H1 (cell line): ENCODE measurements at regions of chr17 and their contacts with region 1.

Region 1: GRCh38 chr17:39099663-39100286 is 51.7 kb downstream of the PLXDC1 start:
- DNase-seq: no peak
- H3K4me3 ChIP-seq: no peak overlapping the region
- H3K27ac ChIP-seq: no peak overlapping the region
- H3K4me1 ChIP-seq: peaks cover 0 to 3% (median 0%) of the 10 kb centered on the region in 4 experiments; a peak in 2 of 7 replicates
- H3K27me3 ChIP-seq: no peaks in the 10 kb centered on the region
- CTCF ChIP-seq: no peak
- EP300 ChIP-seq: no peak
- POLR2A ChIP-seq: no peak
- RAD21 ChIP-seq: no peak

Region 2: GRCh38 chr17:39115135-39115534 is 15.4 kb after region 1 on chr17:
- CTCF ChIA-PET with region 1: interaction called, 10 read pairs
- POLR2A ChIA-PET with region 1: interaction called, 4 read pairs
- DNase-seq: no peak
- H3K4me3 ChIP-seq: no peak overlapping the region
- H3K27ac ChIP-seq: no peak overlapping the region
- H3K4me1 ChIP-seq: peaks cover 0 to 2% (median 0%) of the 10 kb centered on the region in 4 experiments; a peak in 1 of 7 replicates
- H3K27me3 ChIP-seq: no peaks in the 10 kb centered on the region; a peak in 2 of 7 replicates
- CTCF ChIP-seq: no peak
- EP300 ChIP-seq: no peak
- POLR2A ChIP-seq: no peak
- RAD21 ChIP-seq: no peak